ENCODE measurements at regions of chr19 and their contacts with region 1.

Region 1: GRCh38 chr19:12881172-12881808 is at the start of gene DNASE2:
- DNase-seq: peak; percentile 72 to 94 (median 88)
- ATAC-seq: peak; percentile 75
- H3K4me3 ChIP-seq: peak within 1 kb of the TSS; percentile 80 to 89
- H3K4me3 Mint-ChIP-seq: peak within 1 kb of the TSS; percentile 84
- H3K27ac ChIP-seq: peak within 1 kb of the TSS; percentile 73 to 82
- H3K27ac Mint-ChIP-seq: peak within 1 kb of the TSS; percentile 80
- H3K4me1 ChIP-seq: peaks cover 29% of the 10 kb centered on the region
- H3K4me1 Mint-ChIP-seq: peaks cover 28% of the 10 kb centered on the region
- H3K27me3 ChIP-seq: no peaks in the 10 kb centered on the region
- H3K27me3 Mint-ChIP-seq: no peaks in the 10 kb centered on the region
- CTCF ChIP-seq: no peak
- total RNA-seq, gene DNASE2: 5.9 to 8.4 TPM

Region 2: DNA sequence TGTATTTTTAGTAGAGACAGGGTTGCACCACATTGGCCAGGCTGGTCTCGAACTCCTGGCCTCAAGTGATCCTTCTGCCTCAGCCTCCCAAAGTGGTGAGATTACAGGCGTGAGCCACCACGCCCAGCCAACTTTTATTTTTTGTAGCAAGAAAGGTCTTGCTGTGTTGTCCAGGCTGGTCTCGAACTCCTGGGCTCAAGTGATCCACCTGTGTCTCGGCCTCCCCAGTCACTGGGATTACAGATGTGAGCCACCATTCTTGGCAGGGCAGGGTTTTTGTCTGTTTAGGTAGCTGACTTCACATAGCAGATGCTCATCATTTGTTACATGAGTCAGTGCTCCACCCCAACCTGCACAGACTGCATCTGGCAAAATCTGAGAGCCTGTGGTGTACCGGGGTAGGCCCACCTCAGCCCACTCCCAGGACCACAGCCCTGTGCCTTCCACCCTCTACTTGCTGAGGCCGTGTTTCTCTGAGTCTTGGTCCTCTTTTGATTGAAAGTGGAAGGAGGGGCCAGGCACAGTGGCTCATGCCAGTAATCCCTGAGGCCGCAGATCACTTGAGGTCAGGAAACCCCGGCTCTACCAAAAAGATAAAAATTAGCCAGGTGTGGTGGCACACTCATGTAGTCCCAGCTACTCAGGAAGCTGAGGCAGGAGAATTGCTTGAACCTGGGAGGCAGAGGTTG is 153.4 kb before region 1 on chr19:
- CTCF ChIA-PET with region 1: no interaction called
- POLR2A ChIA-PET with region 1: no interaction called
- intact Hi-C with region 1: no loop called
- DNase-seq: no peak
- ATAC-seq: no peak
- H3K4me3 ChIP-seq: no peak overlapping the region
- H3K4me3 Mint-ChIP-seq: no peak overlapping the region
- H3K27ac ChIP-seq: no peak overlapping the region
- H3K27ac Mint-ChIP-seq: no peak overlapping the region
- H3K4me1 ChIP-seq: peaks cover 25% of the 10 kb centered on the region
- H3K4me1 Mint-ChIP-seq: peaks cover 31% of the 10 kb centered on the region
- H3K27me3 ChIP-seq: no peaks in the 10 kb centered on the region
- H3K27me3 Mint-ChIP-seq: no peaks in the 10 kb centered on the region
- CTCF ChIP-seq: no peak

Region 3: GRCh38 chr19:12769689-12770088 is 111.6 kb before region 1 on chr19:
- CTCF ChIA-PET with region 1: no interaction called
- POLR2A ChIA-PET with region 1: no interaction called
- intact Hi-C with region 1: no loop called
- DNase-seq: peak in 6 of 9 experiments; percentile 31 to 75 (median 62)
- ATAC-seq: peak; percentile 93
- H3K4me3 ChIP-seq: no peak overlapping the region
- H3K4me3 Mint-ChIP-seq: peak overlapping the region; percentile 18
- H3K27ac ChIP-seq: no peak overlapping the region
- H3K27ac Mint-ChIP-seq: no peak overlapping the region
- H3K4me1 ChIP-seq: peaks cover 2% of the 10 kb centered on the region
- H3K4me1 Mint-ChIP-seq: peaks cover 6% of the 10 kb centered on the region
- H3K27me3 ChIP-seq: no peaks in the 10 kb centered on the region
- H3K27me3 Mint-ChIP-seq: no peaks in the 10 kb centered on the region
- CTCF ChIP-seq: no peak

Region 4: DNA sequence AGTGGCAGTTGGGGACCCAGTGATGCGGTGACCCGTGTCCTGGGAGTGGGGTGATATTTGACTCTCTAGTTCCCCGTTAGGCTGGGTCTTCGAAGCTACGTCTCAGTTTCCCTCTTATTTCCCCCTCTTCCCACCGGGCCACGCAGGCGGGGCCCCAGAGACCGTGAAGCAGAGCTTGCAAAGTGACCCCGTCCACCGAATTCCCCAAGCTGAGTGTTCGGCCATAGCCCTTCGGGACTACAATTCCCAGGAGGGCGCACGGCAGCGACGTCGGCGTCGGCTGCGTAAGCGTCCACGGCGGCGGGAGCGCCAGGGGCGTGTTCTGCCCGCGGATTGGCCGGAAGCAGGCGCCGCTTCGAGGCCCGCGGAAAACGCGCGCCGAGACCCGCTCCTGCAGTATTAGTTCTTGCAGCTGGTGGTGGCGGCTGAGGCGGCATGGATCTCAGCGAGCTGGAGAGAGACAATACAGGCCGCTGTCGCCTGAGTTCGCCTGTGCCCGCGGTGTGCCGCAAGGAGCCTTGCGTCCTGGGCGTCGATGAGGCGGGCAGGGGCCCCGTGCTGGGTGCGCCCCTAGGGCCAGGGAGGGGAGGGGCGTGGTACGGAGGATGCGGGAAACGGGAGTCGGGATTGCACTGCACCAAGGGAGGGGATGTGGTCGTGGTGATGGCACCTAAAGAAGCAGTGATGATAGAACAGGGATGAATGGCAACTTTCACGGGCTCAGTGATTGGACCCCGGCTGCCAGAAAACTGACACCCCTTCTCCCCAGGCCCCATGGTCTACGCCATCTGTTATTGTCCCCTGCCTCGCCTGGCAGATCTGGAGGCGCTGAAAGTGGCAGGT is 74.8 kb before region 1 on chr19 and contains the start of gene RNASEH2A:
- CTCF ChIA-PET with region 1: no interaction called
- POLR2A ChIA-PET with region 1: no interaction called
- intact Hi-C with region 1: loop called in 1 of 2 experiments (anchors 1 kb)
- DNase-seq: peak; percentile 66 to 93 (median 85)
- ATAC-seq: peak; percentile 92
- H3K4me3 ChIP-seq: peak within 1 kb of the TSS; percentile 60 to 68
- H3K4me3 Mint-ChIP-seq: peak within 1 kb of the TSS; percentile 92
- H3K27ac ChIP-seq: peak within 1 kb of the TSS; percentile 54 to 63
- H3K27ac Mint-ChIP-seq: peak within 1 kb of the TSS; percentile 78
- H3K4me1 ChIP-seq: peaks cover 18% of the 10 kb centered on the region
- H3K4me1 Mint-ChIP-seq: peaks cover 26% of the 10 kb centered on the region
- H3K27me3 ChIP-seq: no peaks in the 10 kb centered on the region
- H3K27me3 Mint-ChIP-seq: no peaks in the 10 kb centered on the region
- CTCF ChIP-seq: no peak
- total RNA-seq, gene RNASEH2A: 1.3 to 2.2 TPM

Region 5: GRCh38 chr19:12856653-12857052 is 24.6 kb before region 1 on chr19:
- CTCF ChIA-PET with region 1: no interaction called
- POLR2A ChIA-PET with region 1: no interaction called
- intact Hi-C with region 1: no loop called
- DNase-seq: no peak
- ATAC-seq: no peak
- H3K4me3 ChIP-seq: no peak overlapping the region
- H3K4me3 Mint-ChIP-seq: no peak overlapping the region
- H3K27ac ChIP-seq: no peak overlapping the region
- H3K27ac Mint-ChIP-seq: no peak overlapping the region
- H3K4me1 ChIP-seq: no peaks in the 10 kb centered on the region
- H3K4me1 Mint-ChIP-seq: no peaks in the 10 kb centered on the region
- H3K27me3 ChIP-seq: no peaks in the 10 kb centered on the region
- H3K27me3 Mint-ChIP-seq: no peaks in the 10 kb centered on the region
- CTCF ChIP-seq: no peak

Region 6: GRCh38 chr19:12918271-12918670 is 37.0 kb after region 1 on chr19:
- CTCF ChIA-PET with region 1: interaction called, 8 read pairs
- POLR2A ChIA-PET with region 1: interaction called, 4 read pairs
- intact Hi-C with region 1: loop called in 1 of 2 experiments (anchors 5 kb)
- DNase-seq: no peak
- ATAC-seq: no peak
- H3K4me3 ChIP-seq: no peak overlapping the region
- H3K4me3 Mint-ChIP-seq: peak overlapping the region; percentile 35
- H3K27ac ChIP-seq: no peak overlapping the region
- H3K27ac Mint-ChIP-seq: no peak overlapping the region
- H3K4me1 ChIP-seq: peaks cover 27% of the 10 kb centered on the region
- H3K4me1 Mint-ChIP-seq: peaks cover 35% of the 10 kb centered on the region
- H3K27me3 ChIP-seq: no peaks in the 10 kb centered on the region
- H3K27me3 Mint-ChIP-seq: no peaks in the 10 kb centered on the region
- CTCF ChIP-seq: no peak

Region 7: GRCh38 chr19:13099073-13099999 is 218.0 kb after region 1 on chr19:
- CTCF ChIA-PET with region 1: interaction called, 9 read pairs
- POLR2A ChIA-PET with region 1: no interaction called
- intact Hi-C with region 1: loop called in 1 of 2 experiments (anchors 5 kb)
- DNase-seq: peak; percentile 61 to 93 (median 81)
- ATAC-seq: peak; percentile 66
- H3K4me3 ChIP-seq: peak overlapping the region; percentile 35 to 54
- H3K4me3 Mint-ChIP-seq: peak overlapping the region; percentile 73
- H3K27ac ChIP-seq: peak overlapping the region; percentile 65 to 87
- H3K27ac Mint-ChIP-seq: peak overlapping the region; percentile 96
- H3K4me1 ChIP-seq: peaks cover 82% of the 10 kb centered on the region
- H3K4me1 Mint-ChIP-seq: peaks cover 51% of the 10 kb centered on the region
- H3K27me3 ChIP-seq: peaks cover 16 to 33% of the 10 kb centered on the region in 2 experiments
- H3K27me3 Mint-ChIP-seq: peaks cover 24% of the 10 kb centered on the region
- CTCF ChIP-seq: no peak

Region 8: GRCh38 chr19:13109361-13110098 is 228.2 kb after region 1 on chr19:
- CTCF ChIA-PET with region 1: no interaction called
- POLR2A ChIA-PET with region 1: no interaction called
- intact Hi-C with region 1: no loop called
- DNase-seq: no peak
- ATAC-seq: no peak
- H3K4me3 ChIP-seq: no peak overlapping the region
- H3K4me3 Mint-ChIP-seq: no peak overlapping the region
- H3K27ac ChIP-seq: no peak overlapping the region
- H3K27ac Mint-ChIP-seq: no peak overlapping the region
- H3K4me1 ChIP-seq: peaks cover 3% of the 10 kb centered on the region
- H3K4me1 Mint-ChIP-seq: peaks cover 5% of the 10 kb centered on the region
- H3K27me3 ChIP-seq: no peaks in the 10 kb centered on the region
- H3K27me3 Mint-ChIP-seq: no peaks in the 10 kb centered on the region
- CTCF ChIP-seq: no peak

Measured in CD8-positive, alpha-beta T cell (primary cell).